Mammary epithelial cell (primary cell): ENCODE measurements at regions of chr22 and their contacts with region 1.

Region 1: DNA sequence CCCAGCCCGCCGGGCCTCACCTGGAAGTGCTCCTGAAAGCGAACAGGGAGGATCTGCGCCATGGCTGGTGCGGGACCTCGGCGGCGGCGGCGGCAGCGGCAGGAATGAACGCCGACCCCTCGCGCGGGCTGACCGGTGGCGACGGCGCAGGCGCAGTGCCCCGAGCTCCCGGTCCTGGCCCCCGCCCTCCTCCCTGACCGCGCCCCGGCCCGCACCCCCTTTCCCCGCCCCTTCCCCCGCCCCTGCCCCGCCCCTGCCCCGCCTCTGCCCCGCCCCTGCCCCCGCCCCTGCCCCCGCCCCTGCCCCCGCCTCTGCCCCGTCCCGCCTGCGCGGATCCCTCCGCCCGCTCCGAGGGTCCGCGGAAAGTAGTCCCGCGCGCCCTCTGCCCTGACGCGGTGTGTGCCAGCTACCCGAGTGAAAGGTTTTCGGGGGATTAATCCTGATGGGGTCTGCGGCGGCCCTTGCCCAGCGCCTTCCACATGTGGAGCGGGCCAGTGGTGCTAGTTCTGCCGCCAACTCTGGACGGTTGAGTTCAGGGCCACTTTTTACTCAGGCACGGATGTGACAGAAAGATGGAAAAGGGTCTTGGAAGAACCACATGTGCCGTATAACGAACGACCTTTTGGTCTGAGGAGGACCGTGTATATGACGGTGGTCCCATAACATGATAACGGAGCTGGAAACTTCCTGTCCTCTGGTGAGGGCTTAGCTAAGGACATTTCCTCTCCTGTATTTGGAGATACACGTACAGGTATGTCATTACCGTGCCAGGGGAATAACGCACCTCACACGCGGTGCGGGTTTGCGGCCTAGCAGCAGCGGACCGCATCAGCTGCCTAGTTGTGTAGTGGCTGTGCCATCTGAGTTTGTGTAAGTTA is at the start of gene CLTCL1:
- DNase-seq: peak; percentile 71
- H3K4me3 ChIP-seq: peak within 1 kb of the TSS; percentile 74 to 81 (median 80)
- H3K27ac ChIP-seq: peak within 1 kb of the TSS; percentile 46
- H3K4me1 ChIP-seq: peaks cover 47% of the 10 kb centered on the region
- H3K27me3 ChIP-seq: no peaks in the 10 kb centered on the region
- CTCF ChIP-seq: no peak
- total RNA-seq, gene CLTCL1: 30.0 to 33.2 TPM

Region 2: GRCh38 chr22:19109198-19110067 is 182.4 kb before region 1 on chr22:
- CTCF ChIA-PET with region 1: no interaction called
- dilution Hi-C with region 1: no loop called
- in situ Hi-C with region 1: no loop called
- intact Hi-C with region 1: loop called (anchors 5 kb)
- DNase-seq: peak; percentile 88
- H3K4me3 ChIP-seq: peak overlapping the region in 1 of 3 experiments; percentile 4
- H3K27ac ChIP-seq: peak overlapping the region; percentile 88
- H3K4me1 ChIP-seq: peaks cover 20% of the 10 kb centered on the region
- H3K27me3 ChIP-seq: no peaks in the 10 kb centered on the region
- CTCF ChIP-seq: no peak

Region 3: GRCh38 chr22:19218541-19219233 is 73.1 kb before region 1 on chr22:
- CTCF ChIA-PET with region 1: no interaction called
- dilution Hi-C with region 1: no loop called
- in situ Hi-C with region 1: no loop called
- intact Hi-C with region 1: loop called (anchors 1 kb)
- DNase-seq: no peak
- H3K4me3 ChIP-seq: no peak overlapping the region
- H3K27ac ChIP-seq: no peak overlapping the region
- H3K4me1 ChIP-seq: no peaks in the 10 kb centered on the region
- H3K27me3 ChIP-seq: no peaks in the 10 kb centered on the region
- CTCF ChIP-seq: no peak

Region 4: DNA sequence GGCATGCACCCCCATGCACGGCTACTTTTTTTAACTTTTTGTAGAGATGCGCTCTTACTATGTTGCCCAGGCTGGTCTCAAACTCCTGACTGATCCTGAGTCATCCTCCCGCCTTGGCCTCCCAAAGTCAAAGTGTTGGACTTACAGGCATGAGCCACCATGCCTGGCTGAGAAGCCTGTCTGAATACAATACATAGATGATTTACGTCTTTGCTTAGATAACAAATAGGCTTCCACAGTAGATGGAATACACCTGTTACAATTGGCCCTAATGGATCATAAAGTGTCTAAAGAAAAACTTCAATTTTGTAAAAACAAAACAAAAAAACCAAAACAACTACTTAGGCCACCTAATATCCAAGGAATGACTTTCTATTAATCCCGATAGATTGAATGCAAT is 12.7 kb after region 1 on chr22:
- CTCF ChIA-PET with region 1: no interaction called
- dilution Hi-C with region 1: no loop called
- in situ Hi-C with region 1: no loop called
- intact Hi-C with region 1: no loop called
- DNase-seq: no peak
- H3K4me3 ChIP-seq: no peak overlapping the region
- H3K27ac ChIP-seq: no peak overlapping the region
- H3K4me1 ChIP-seq: no peaks in the 10 kb centered on the region
- H3K27me3 ChIP-seq: no peaks in the 10 kb centered on the region
- CTCF ChIP-seq: no peak

Region 5: GRCh38 chr22:19432133-19432851 is 140.5 kb after region 1 on chr22 and contains the start of gene MRPL40:
- CTCF ChIA-PET with region 1: no interaction called
- dilution Hi-C with region 1: no loop called
- in situ Hi-C with region 1: no loop called
- intact Hi-C with region 1: loop called (anchors 5 kb)
- DNase-seq: peak; percentile 92
- H3K4me3 ChIP-seq: peak within 1 kb of the TSS; percentile 70 to 95 (median 93)
- H3K27ac ChIP-seq: peak within 1 kb of the TSS; percentile 63
- H3K4me1 ChIP-seq: peaks cover 17% of the 10 kb centered on the region
- H3K27me3 ChIP-seq: no peaks in the 10 kb centered on the region
- CTCF ChIP-seq: no peak
- total RNA-seq, gene MRPL40: 22.8 to 40.0 TPM

Region 6: GRCh38 chr22:19479357-19480172 is 187.7 kb after region 1 on chr22 and contains the start of gene CDC45:
- CTCF ChIA-PET with region 1: no interaction called
- dilution Hi-C with region 1: no loop called
- in situ Hi-C with region 1: no loop called
- intact Hi-C with region 1: loop called (anchors 5 kb)
- DNase-seq: peak; percentile 98
- H3K4me3 ChIP-seq: peak within 1 kb of the TSS; percentile 40 to 93 (median 91)
- H3K27ac ChIP-seq: peak within 1 kb of the TSS; percentile 100
- H3K4me1 ChIP-seq: peaks cover 30% of the 10 kb centered on the region
- H3K27me3 ChIP-seq: no peaks in the 10 kb centered on the region
- CTCF ChIP-seq: no peak
- total RNA-seq, gene CDC45: 2.2 to 31.1 TPM